HepG2 (cell line): ENCODE measurements at regions of chr9 and their contacts with region 1.

Region 1: DNA sequence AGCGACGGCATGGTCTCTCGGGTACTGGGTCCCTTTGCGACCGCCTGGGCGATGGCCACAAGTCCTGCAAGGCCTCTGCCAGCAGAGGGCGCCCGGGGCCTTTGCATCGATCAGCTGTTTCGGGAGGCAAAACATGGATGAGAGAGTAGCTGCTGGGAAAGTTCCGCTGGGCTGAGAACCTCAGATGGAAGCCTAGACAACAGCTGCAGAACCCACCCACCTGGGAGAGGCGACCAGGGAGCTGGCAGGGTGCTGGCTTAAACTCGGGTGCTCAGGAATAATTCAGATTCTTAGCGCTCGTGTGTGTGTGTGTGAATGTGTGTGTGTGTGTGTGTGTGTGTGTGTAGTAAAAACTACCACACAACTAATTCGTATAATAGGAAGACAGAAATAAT is 50.0 kb downstream of the TRIM32 start:
- DNase-seq: peak; percentile 66
- ATAC-seq: peak; percentile 99
- H3K4me3 ChIP-seq: no peak overlapping the region
- H3K27ac ChIP-seq: no peak overlapping the region
- H3K4me1 ChIP-seq: no peaks in the 10 kb centered on the region
- H3K27me3 ChIP-seq: 0 out of 5 replicates have a peak, but pooled peaks cover 2 to 9% of the 10 kb centered on the region in 2 experiments
- CTCF ChIP-seq: peak; percentile 95
- EP300 ChIP-seq: no peak
- POLR2A ChIP-seq: no peak
- RAD21 ChIP-seq: peak; percentile 87

Region 2: DNA sequence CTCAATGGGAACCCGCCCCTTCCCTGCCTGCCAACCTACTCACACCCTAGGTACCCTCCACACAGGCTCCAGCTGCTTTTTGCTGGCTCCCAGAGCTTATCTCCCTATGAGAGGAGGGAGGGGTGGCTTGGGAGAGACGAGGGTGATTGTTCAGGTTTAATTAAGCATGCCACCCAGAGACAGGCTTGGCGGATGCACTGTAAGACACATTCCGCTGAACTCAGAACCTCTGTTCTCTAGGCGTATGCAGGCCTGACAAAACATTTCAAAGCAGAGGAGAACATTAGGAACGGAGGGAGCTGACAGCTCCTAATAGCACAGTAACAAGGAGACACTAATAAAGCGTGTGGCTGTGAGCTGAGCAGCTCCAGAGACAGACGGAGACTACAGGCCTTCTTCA is 30.1 kb after region 1 on chr9:
- CTCF ChIA-PET with region 1: no interaction called
- POLR2A ChIA-PET with region 1: no interaction called
- in situ Hi-C with region 1: no loop called
- intact Hi-C with region 1: no loop called
- DNase-seq: no peak
- ATAC-seq: no peak
- H3K4me3 ChIP-seq: no peak overlapping the region
- H3K27ac ChIP-seq: no peak overlapping the region
- H3K4me1 ChIP-seq: no peaks in the 10 kb centered on the region
- H3K27me3 ChIP-seq: no peaks in the 10 kb centered on the region
- CTCF ChIP-seq: no peak
- EP300 ChIP-seq: no peak
- POLR2A ChIP-seq: no peak
- RAD21 ChIP-seq: no peak

Region 3: DNA sequence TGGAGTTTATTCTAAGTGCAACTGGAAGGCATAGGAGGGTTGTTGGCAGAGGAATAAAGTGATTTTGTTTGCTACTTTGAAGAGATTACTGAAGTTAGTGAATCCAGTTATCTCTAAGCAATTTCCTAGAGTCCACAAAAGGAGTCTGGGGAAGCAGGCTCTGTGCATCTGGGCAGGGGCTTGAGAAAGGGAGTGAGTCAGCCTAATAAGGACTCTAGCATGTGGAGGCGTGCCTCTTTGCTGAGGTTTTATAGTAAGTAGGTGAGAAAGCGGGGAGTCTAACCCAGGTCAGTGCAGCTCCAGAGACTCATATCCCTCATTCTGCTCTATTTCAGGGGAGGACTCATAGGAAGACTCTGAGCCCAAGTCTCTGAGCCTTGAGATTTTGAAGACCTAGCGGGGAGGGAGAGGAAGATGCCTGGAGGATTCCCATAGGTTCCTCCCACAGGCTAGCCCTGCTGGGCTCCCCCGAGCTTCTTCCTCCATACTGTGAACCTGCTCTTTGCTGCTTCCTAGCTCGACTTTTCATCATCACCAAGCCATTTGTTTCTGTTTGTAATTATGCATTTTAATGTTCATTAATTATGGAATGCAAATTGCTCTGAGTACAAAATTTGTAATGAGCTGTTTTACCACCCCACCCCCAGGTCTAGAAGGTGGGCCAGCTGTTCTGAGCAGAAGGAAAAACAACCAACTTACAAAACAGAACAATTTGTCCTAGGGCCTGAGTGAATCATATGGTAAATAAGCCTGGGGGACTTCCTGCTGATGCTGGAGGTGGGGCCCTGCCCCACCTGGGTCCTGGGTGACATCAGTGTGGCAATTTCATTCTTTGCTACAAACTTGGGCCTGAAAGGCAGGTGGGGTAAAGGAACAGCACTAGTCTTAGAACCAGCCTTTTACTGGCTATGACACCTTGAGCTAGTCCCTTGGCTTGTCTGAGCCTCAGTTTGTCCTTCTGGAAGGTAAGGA is 100.2 kb after region 1 on chr9:
- CTCF ChIA-PET with region 1: no interaction called
- POLR2A ChIA-PET with region 1: no interaction called
- in situ Hi-C with region 1: no loop called
- intact Hi-C with region 1: no loop called
- DNase-seq: no peak
- ATAC-seq: no peak
- H3K4me3 ChIP-seq: no peak overlapping the region
- H3K27ac ChIP-seq: no peak overlapping the region
- H3K4me1 ChIP-seq: no peaks in the 10 kb centered on the region
- H3K27me3 ChIP-seq: no peaks in the 10 kb centered on the region
- CTCF ChIP-seq: no peak
- EP300 ChIP-seq: no peak
- POLR2A ChIP-seq: no peak
- RAD21 ChIP-seq: no peak

Region 4: DNA sequence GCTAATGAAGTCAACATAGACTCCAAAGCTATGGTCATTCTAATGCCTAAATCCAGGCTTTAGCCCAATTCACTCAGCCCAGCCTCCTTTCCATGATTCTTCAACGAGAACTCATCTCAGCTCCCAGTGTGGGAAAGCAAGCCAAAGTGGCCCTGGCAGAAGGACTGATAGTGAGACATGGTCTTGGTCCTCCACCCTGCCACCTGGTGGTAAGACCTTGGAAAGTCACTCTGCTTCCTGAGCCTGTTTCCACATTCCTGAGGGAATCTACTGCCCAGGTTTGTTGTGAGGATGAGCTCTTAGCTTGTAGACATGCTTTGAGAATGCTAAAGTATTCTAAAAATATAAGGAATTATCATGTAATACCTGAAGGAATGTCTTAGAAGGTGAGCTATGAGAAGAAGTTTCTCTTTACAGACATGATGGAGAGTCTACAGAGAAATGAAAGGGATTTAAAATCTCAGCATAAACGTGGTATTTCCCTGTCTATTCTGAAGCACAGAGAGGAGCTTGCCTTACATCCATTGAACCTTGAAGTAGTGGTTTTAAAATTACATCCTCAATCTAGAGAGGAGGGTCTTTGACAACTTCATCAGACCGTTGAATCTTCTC is 123.5 kb after region 1 on chr9:
- CTCF ChIA-PET with region 1: interaction called, 39 read pairs
- POLR2A ChIA-PET with region 1: no interaction called
- in situ Hi-C with region 1: loop called (anchors 5 kb)
- intact Hi-C with region 1: loop called (anchors 1 kb)
- DNase-seq: peak; percentile 49
- ATAC-seq: peak; percentile 96
- H3K4me3 ChIP-seq: no peak overlapping the region
- H3K27ac ChIP-seq: no peak overlapping the region
- H3K4me1 ChIP-seq: no peaks in the 10 kb centered on the region
- H3K27me3 ChIP-seq: peaks cover 0 to 2% of the 10 kb centered on the region in 2 experiments; a peak in 1 of 5 replicates
- CTCF ChIP-seq: peak; percentile 84
- EP300 ChIP-seq: no peak
- POLR2A ChIP-seq: no peak
- RAD21 ChIP-seq: peak; percentile 37; the same call in 1 of the 2 replicates

Region 5: GRCh38 chr9:117178596-117179375 is 441.6 kb after region 1 on chr9:
- CTCF ChIA-PET with region 1: no interaction called
- POLR2A ChIA-PET with region 1: no interaction called
- in situ Hi-C with region 1: no loop called
- intact Hi-C with region 1: no loop called
- DNase-seq: no peak
- ATAC-seq: no peak
- H3K4me3 ChIP-seq: no peak overlapping the region
- H3K27ac ChIP-seq: no peak overlapping the region
- H3K4me1 ChIP-seq: no peaks in the 10 kb centered on the region
- H3K27me3 ChIP-seq: no peaks in the 10 kb centered on the region
- CTCF ChIP-seq: no peak
- EP300 ChIP-seq: no peak
- POLR2A ChIP-seq: no peak
- RAD21 ChIP-seq: no peak

Region 6: DNA sequence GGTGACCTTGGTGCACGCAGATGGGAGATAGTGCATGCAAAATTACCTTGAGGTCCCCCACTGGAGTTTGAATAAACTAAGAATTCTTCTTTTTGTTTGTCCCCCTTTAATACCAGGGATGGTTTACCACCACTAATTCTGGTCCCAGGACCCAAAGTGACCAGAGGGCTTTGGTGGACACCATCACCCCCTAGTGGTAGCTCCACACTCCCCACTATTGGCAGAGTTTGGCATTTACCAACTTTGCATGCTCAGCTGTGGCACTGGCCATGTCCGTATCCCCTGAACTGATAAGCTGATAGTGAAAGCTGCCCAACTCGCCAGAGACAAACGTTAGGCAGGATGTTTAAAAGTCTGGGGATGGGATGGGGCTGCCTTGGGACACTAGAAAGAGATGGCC is 674.4 kb after region 1 on chr9:
- CTCF ChIA-PET with region 1: no interaction called
- POLR2A ChIA-PET with region 1: no interaction called
- in situ Hi-C with region 1: loop called (anchors 25 kb)
- intact Hi-C with region 1: loop called (anchors 5 kb)
- DNase-seq: peak; percentile 18
- ATAC-seq: peak; percentile 84
- H3K4me3 ChIP-seq: no peak overlapping the region
- H3K27ac ChIP-seq: no peak overlapping the region
- H3K4me1 ChIP-seq: no peaks in the 10 kb centered on the region
- H3K27me3 ChIP-seq: peaks cover 4 to 30% of the 10 kb centered on the region in 2 experiments; a peak in 4 of 5 replicates
- CTCF ChIP-seq: peak; percentile 60
- EP300 ChIP-seq: no peak
- POLR2A ChIP-seq: no peak
- RAD21 ChIP-seq: no peak